T-cell (primary cell): ENCODE measurements at regions of chr4 and their contacts with region 1.

Region 1: DNA sequence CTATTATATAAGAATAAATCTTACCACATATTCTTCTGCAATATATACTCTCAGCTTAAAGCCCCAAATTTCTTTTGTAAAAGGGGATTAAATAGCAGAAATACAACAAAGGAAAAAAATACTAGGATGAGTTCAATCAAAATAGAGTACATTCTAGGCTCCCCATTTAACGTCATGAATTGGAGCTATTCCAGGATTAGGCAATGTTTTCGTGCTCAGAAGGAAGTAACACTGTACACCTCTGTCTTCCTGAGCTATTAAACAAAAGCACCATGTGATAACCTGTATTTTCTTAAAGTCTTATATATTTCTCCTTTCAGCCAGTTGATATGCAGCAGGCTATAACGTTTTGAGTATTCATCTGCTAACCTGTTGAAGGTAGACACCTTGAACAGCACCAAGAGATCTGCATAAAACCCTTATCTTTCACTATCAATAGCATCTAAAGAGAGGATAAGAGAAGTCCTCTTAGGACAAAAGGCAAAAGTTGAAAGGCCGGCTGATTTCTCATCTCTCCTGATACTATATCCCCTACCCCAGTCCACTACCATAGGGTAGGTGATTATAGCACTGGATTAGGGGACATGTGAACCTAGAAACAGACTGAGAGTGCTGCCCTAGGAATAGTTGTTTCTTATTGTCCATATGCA is 31.5 kb downstream of the TEC start:
- DNase-seq: no peak
- ATAC-seq: no peak
- H3K4me3 ChIP-seq: no peak overlapping the region
- H3K4me3 Mint-ChIP-seq: no peak overlapping the region
- H3K27ac ChIP-seq: no peak overlapping the region
- H3K27ac Mint-ChIP-seq: no peak overlapping the region
- H3K4me1 ChIP-seq: peaks cover 0 to 3% of the 10 kb centered on the region in 2 experiments
- H3K4me1 Mint-ChIP-seq: peaks cover 10 to 14% (median 13%) of the 10 kb centered on the region in 3 donors
- H3K27me3 ChIP-seq: no peaks in the 10 kb centered on the region
- H3K27me3 Mint-ChIP-seq: no peaks in the 10 kb centered on the region

Region 2: GRCh38 chr4:47334652-47335051 is 903.5 kb before region 1 on chr4:
- CTCF ChIA-PET with region 1: no interaction called
- POLR2A ChIA-PET with region 1: no interaction called
- DNase-seq: no peak
- ATAC-seq: no peak
- H3K4me3 ChIP-seq: no peak overlapping the region
- H3K4me3 Mint-ChIP-seq: no peak overlapping the region
- H3K27ac ChIP-seq: no peak overlapping the region
- H3K27ac Mint-ChIP-seq: no peak overlapping the region
- H3K4me1 ChIP-seq: no peaks in the 10 kb centered on the region
- H3K4me1 Mint-ChIP-seq: no peaks in the 10 kb centered on the region
- H3K27me3 ChIP-seq: peaks cover 0 to 3% of the 10 kb centered on the region in 2 experiments
- H3K27me3 Mint-ChIP-seq: peaks cover 12 to 26% of the 10 kb centered on the region in 2 donors

Region 3: GRCh38 chr4:47349326-47349725 is 888.8 kb before region 1 on chr4:
- CTCF ChIA-PET with region 1: interaction called in 1 of 2 experiments, 10 read pairs
- POLR2A ChIA-PET with region 1: no interaction called
- DNase-seq: no peak
- ATAC-seq: no peak
- H3K4me3 ChIP-seq: no peak overlapping the region
- H3K4me3 Mint-ChIP-seq: no peak overlapping the region
- H3K27ac ChIP-seq: no peak overlapping the region
- H3K27ac Mint-ChIP-seq: no peak overlapping the region
- H3K4me1 ChIP-seq: no peaks in the 10 kb centered on the region
- H3K4me1 Mint-ChIP-seq: no peaks in the 10 kb centered on the region
- H3K27me3 ChIP-seq: no peaks in the 10 kb centered on the region
- H3K27me3 Mint-ChIP-seq: peaks cover 8 to 15% of the 10 kb centered on the region in 2 donors

Region 4: GRCh38 chr4:48203819-48204218 is 34.3 kb before region 1 on chr4:
- CTCF ChIA-PET with region 1: no interaction called
- POLR2A ChIA-PET with region 1: no interaction called
- DNase-seq: no peak
- ATAC-seq: no peak
- H3K4me3 ChIP-seq: no peak overlapping the region
- H3K4me3 Mint-ChIP-seq: no peak overlapping the region
- H3K27ac ChIP-seq: no peak overlapping the region
- H3K27ac Mint-ChIP-seq: no peak overlapping the region
- H3K4me1 ChIP-seq: no peaks in the 10 kb centered on the region
- H3K4me1 Mint-ChIP-seq: no peaks in the 10 kb centered on the region
- H3K27me3 ChIP-seq: no peaks in the 10 kb centered on the region
- H3K27me3 Mint-ChIP-seq: peaks cover 8% of the 10 kb centered on the region in 2 donors

Region 5: GRCh38 chr4:48223633-48224295 is 14.4 kb before region 1 on chr4:
- CTCF ChIA-PET with region 1: no interaction called
- POLR2A ChIA-PET with region 1: no interaction called
- DNase-seq: no peak
- ATAC-seq: no peak
- H3K4me3 ChIP-seq: no peak overlapping the region
- H3K4me3 Mint-ChIP-seq: no peak overlapping the region
- H3K27ac ChIP-seq: no peak overlapping the region
- H3K27ac Mint-ChIP-seq: no peak overlapping the region
- H3K4me1 ChIP-seq: no peaks in the 10 kb centered on the region
- H3K4me1 Mint-ChIP-seq: peaks cover 0 to 4% (median 0%) of the 10 kb centered on the region in 3 donors
- H3K27me3 ChIP-seq: no peaks in the 10 kb centered on the region
- H3K27me3 Mint-ChIP-seq: no peaks in the 10 kb centered on the region